ENCODE measurements at regions of chr17 and their contacts with region 1.

Region 1: DNA sequence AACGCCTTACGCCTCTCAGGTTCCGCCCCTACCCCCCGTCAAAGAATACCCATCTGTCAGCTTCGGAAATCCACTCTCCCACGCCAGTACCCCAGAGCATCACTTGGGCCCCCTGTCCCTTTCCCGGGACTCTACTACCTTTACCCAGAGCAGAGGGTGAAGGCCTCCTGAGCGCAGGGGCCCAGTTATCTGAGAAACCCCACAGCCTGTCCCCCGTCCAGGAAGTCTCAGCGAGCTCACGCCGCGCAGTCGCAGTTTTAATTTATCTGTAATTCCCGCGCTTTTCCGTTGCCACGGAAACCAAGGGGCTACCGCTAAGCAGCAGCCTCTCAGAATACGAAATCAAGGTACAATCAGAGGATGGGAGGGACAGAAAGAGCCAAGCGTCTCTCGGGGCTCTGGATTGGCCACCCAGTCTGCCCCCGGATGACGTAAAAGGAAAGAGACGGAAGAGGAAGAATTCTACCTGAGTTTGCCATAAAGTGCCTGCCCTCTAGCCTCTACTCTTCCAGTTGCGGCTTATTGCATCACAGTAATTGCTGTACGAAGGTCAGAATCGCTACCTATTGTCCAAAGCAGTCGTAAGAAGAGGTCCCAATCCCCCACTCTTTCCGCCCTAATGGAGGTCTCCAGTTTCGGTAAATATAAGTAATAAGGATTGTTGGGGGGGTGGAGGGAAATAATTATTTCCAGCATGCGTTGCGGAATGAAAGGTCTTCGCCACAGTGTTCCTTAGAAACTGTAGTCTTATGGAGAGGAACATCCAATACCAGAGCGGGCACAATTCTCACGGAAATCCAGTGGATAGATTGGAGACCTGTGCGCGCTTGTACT is at the start of gene BRCA1:
- DNase-seq: peak; percentile 92
- ATAC-seq: peak; percentile 98
- total RNA-seq, gene BRCA1: 7.3 TPM

Region 2: GRCh38 chr17:43024407-43025289 is 100.7 kb before region 1 on chr17 and contains the start of gene RND2:
- intact Hi-C with region 1: loop called (anchors 10 kb)
- DNase-seq: peak; percentile 90
- ATAC-seq: peak; percentile 71
- total RNA-seq, gene RND2: 0.65 TPM